Dorsolateral prefrontal cortex (tissue), 120 donors: ENCODE measurements at regions of chr6 and their contacts with region 1.

Region 1: DNA sequence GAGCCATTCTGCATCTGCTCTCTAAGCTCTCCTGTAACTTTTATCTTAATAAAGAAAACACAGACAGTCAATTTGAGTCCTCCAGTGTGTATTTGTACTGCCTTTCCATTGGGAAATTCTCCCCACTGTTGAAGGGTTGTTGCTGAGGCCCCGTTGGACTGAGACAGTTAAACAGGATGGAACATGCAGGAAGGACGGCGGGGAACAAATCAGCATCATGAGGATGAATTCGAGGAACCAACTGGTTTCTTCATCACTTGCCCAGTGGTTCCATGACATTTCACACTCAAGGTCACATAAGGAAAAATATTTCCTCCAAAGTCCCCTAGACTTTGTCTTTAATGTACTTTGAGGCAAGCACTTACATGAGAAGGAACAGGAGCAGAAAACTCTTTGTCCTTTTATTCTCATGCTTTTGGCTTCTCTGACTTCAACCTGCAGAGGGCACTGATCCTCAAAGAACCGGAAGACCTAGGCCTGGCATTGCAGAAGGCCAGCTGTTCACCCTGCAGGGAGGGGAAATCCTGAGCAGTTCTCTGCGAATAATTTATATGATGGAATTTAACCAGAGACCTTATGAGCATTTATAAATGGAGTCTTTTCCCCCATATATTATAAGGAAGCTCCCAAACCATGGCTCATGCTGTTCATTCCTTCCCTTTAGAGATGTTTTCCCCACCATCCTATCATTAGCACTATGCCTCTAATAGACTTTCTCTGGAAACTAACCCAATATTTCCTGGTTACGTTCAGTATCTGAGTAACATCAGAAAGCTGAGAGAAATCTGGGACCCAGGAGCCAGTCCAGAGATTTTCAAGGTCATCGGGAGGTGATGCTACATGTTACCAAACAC is 55.2 kb upstream of the ADGRF1 start:
- DNase-seq: peak in 9 of 10 donors; percentile 22 to 80 (median 60)
- H3K4me3 ChIP-seq: no peak overlapping the region
- H3K27ac ChIP-seq: peak overlapping the region in 8 of 59 donors; percentile 3 to 52 (median 24)
- H3K27me3 ChIP-seq: no peaks in the 10 kb centered on the region
- CTCF ChIP-seq: peak; percentile 36 to 85 (median 72)

Region 2: GRCh38 chr6:46347669-46348068 is 749.6 kb before region 1 on chr6:
- intact Hi-C with region 1: no loop called
- DNase-seq: no peak
- H3K4me3 ChIP-seq: no peak overlapping the region
- H3K27ac ChIP-seq: no peak overlapping the region
- H3K27me3 ChIP-seq: no peaks in the 10 kb centered on the region
- CTCF ChIP-seq: no peak

Region 3: DNA sequence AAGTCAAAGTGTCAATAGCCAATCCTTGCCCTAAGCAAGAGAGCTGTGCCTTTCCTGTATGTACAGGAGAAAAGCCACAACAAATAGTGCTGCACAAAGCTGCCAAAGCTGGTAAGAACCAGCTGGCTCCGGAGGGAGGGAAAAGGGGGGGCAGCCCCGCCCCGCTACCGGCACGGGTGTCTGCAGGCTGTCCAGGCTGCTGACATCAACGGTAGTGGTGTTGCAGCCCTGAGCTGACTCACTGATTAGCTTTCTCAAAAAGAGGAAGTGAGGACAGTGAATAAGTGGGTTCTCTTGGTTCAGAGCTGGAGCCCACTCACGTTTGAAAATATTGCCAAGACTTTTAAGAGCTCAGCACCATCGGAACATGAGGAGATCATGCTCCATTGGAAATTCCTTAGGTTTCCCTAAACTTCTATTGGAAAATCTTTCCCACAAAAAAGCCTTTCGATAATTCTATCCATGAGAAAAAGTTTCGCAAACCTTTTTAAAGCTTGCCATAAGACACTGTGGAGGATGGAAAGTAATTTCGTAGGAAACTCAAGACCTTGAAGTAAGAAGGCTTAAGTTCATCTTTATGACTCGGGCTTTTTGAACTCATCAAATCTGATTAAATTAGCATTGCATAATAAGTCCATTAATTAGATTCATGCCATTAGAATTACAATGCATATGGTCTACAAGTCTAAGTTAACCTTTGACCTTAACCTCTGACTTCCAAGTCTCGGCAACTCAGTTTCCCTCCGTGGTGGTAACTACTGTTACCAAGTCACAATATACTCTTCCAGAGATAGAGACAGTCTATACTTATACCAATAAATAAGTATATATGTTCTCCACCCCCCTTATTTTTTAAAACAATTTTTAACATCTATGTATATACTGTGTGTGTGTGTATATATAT is 145.4 kb after region 1 on chr6:
- intact Hi-C with region 1: loop called in 1 of 2 experiments (anchors 5 kb)
- DNase-seq: peak; percentile 47 to 91 (median 69)
- H3K4me3 ChIP-seq: peak overlapping the region in 19 of 59 donors; percentile 0 to 45 (median 13)
- H3K27ac ChIP-seq: peak overlapping the region in 13 of 59 donors; percentile 7 to 60 (median 26)
- H3K27me3 ChIP-seq: no peaks in the 10 kb centered on the region
- CTCF ChIP-seq: no peak

Region 4: DNA sequence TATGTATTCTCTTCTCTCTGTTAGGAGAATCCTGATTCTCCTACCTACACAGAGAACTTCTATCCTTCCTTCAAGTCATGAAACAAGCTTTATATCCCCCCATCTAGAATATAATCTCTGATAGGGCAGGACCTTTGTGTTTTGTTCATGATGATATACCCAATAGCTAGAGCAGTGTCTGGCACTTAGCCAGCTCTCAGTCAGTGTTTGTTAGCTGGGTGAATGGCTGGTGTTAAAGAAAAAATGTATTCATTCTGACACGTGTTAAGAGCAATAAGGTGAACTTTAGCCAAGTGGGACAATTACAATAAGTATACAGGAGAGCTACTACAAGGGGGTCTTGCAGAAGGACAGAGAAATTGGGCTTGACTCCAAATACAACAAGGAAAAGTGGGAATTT is 246.7 kb after region 1 on chr6:
- intact Hi-C with region 1: no loop called
- DNase-seq: peak in 1 of 10 donors; percentile 35
- H3K4me3 ChIP-seq: no peak overlapping the region
- H3K27ac ChIP-seq: no peak overlapping the region
- H3K27me3 ChIP-seq: no peaks in the 10 kb centered on the region
- CTCF ChIP-seq: no peak